Common myeloid progenitor, CD34-positive (primary cell): ENCODE measurements at regions of chr11 and their contacts with region 1.

Region 1: DNA sequence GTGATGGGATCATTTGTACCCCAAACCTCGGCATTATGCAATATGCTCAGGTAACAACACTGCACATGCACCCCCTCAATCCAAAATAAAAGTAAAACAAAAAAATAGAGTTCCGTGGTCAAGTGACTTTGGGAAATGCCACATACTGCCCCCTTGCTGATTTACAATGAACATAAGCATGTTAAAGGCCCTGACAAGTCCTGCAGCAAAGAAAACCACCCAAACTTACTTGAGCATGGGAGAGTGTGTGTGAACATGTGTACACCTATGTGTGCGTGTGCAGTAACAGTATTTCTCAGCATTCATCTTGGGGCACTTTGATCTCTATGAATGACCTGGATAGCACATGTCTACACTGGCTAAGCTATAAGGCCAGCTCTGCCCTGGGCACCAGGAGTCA is 15.8 kb upstream of the IGSF22 start:
- DNase-seq: peak in 1 of 3 donors; percentile 6
- H3K4me3 ChIP-seq: no peak overlapping the region
- H3K27ac ChIP-seq: no peak overlapping the region
- H3K4me1 ChIP-seq: no peaks in the 10 kb centered on the region
- H3K27me3 ChIP-seq: peaks cover 0 to 2% (median 0%) of the 10 kb centered on the region in 5 experiments

Region 2: GRCh38 chr11:18757811-18758210 is 16.0 kb after region 1 on chr11:
- CTCF ChIA-PET with region 1: interaction called, 19 read pairs
- POLR2A ChIA-PET with region 1: no interaction called
- DNase-seq: no peak
- H3K4me3 ChIP-seq: no peak overlapping the region
- H3K27ac ChIP-seq: no peak overlapping the region
- H3K4me1 ChIP-seq: no peaks in the 10 kb centered on the region
- H3K27me3 ChIP-seq: peaks cover 0 to 2% (median 0%) of the 10 kb centered on the region in 5 experiments